ENCODE measurements at regions of chr9 and their contacts with region 1.

Region 1: DNA sequence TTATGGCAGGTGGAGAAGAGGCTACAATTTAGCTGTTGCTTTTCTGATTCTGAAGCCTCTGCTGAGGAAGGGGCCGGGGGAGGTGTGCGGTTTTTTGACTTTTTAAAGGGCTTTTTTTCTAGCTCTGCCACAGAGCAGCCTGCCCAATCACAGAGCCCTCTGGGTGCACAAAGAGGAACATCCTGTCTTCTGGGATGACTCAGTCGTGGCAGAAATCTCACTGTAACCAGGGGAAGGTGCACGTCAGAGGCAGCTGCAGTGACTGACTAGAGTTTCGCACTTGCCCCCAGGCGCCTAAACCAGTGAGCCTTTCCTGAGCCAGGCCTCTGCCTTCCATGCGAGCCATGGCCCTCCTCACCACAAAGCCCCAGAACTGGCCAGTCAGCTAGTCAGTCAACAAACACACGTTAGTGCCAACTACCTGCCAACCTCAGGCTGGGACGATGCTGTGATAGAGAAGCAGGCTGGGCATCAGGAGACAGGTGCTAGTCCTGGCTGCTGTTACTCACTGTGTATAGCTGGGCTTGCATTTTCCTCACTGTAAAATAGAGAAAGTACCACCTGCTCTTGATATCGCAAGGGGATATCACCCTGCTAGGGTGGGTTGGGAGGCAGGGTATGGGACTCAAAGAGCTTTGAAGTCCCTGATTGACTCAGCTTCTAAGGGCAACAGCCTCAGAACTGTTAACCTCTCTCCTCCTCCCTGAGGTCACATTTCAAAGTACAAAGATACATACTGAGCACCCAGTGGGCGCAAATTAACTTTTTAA is 2.2 kb downstream of the AKNA start:
- DNase-seq: peak; percentile 95
- ATAC-seq: peak; percentile 81
- H3K4me3 Mint-ChIP-seq: peak overlapping the region; percentile 99
- H3K27ac Mint-ChIP-seq: peak overlapping the region; percentile 95
- H3K4me1 Mint-ChIP-seq: peaks cover 50% of the 10 kb centered on the region
- H3K27me3 Mint-ChIP-seq: no peaks in the 10 kb centered on the region

Region 2: DNA sequence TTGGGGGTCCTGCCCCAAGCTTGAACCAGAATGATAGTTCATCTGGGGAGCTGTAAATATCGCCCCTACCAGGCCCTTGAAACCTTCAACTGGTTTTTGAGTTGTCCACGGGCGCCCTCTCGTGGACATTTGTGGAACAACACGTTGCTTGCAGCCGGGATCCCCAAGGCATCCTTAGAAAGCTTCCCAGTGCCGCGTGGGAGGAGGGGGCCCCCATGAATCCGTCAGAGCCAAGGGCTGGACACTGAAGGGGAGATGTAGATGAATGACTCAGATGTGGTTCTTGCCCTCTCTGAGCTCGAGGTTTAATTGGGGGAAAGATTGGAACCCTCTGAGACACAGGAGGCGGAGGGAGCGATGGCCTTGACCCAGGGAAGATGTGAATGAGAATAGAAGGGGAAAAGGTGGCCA is 94.5 kb before region 1 on chr9:
- CTCF ChIA-PET with region 1: no interaction called
- POLR2A ChIA-PET with region 1: no interaction called
- DNase-seq: peak; percentile 78
- ATAC-seq: peak; percentile 71
- H3K4me3 Mint-ChIP-seq: no peak overlapping the region
- H3K27ac Mint-ChIP-seq: no peak overlapping the region
- H3K4me1 Mint-ChIP-seq: no peaks in the 10 kb centered on the region
- H3K27me3 Mint-ChIP-seq: peaks cover 5% of the 10 kb centered on the region

Region 3: GRCh38 chr9:114339130-114339908 is 46.3 kb before region 1 on chr9:
- CTCF ChIA-PET with region 1: interaction called, 46 read pairs
- POLR2A ChIA-PET with region 1: interaction called, 7 read pairs
- DNase-seq: peak; percentile 64
- ATAC-seq: peak; percentile 46
- H3K4me3 Mint-ChIP-seq: no peak overlapping the region
- H3K27ac Mint-ChIP-seq: peak overlapping the region; percentile 43
- H3K4me1 Mint-ChIP-seq: peaks cover 43% of the 10 kb centered on the region
- H3K27me3 Mint-ChIP-seq: no peaks in the 10 kb centered on the region

Region 4: GRCh38 chr9:114348906-114349482 is 36.6 kb before region 1 on chr9:
- CTCF ChIA-PET with region 1: interaction called, 42 read pairs
- POLR2A ChIA-PET with region 1: interaction called, 10 read pairs
- DNase-seq: peak; percentile 78
- ATAC-seq: peak; percentile 75
- H3K4me3 Mint-ChIP-seq: peak overlapping the region; percentile 16
- H3K27ac Mint-ChIP-seq: peak overlapping the region; percentile 92
- H3K4me1 Mint-ChIP-seq: peaks cover 69% of the 10 kb centered on the region
- H3K27me3 Mint-ChIP-seq: no peaks in the 10 kb centered on the region

Region 5: GRCh38 chr9:114366334-114367128 is 19.1 kb before region 1 on chr9:
- CTCF ChIA-PET with region 1: interaction called, 116 read pairs
- POLR2A ChIA-PET with region 1: interaction called, 407 read pairs
- DNase-seq: peak; percentile 59
- ATAC-seq: peak; percentile 38
- H3K4me3 Mint-ChIP-seq: peak overlapping the region; percentile 29
- H3K27ac Mint-ChIP-seq: peak overlapping the region; percentile 88
- H3K4me1 Mint-ChIP-seq: peaks cover 92% of the 10 kb centered on the region
- H3K27me3 Mint-ChIP-seq: no peaks in the 10 kb centered on the region

Region 6: DNA sequence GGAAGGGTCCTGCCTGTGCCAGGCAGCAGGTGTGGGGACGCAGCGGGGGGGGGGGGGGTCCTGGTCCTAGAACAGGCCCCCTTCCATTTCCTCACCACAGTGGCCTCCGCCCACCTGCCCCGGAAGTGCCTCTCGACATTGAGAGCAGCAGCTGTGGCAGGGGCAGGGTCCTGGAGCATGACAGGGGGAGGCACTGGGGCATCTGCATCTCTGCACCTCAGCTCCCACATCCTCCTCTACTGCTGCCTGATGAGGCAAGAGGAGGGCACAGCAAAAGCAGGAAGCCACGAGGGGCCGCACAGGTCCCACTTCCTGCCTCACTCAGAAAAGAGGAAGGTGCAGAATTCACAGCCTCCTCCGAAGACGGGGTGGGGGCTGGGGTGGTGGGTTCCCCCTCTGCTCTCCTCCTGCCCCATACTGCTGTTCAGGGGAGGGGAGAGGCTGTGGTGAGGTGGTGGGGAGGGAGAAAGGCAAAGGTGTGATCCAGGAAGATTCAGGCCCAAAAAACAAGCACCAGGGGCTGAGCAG is 12.6 kb before region 1 on chr9:
- CTCF ChIA-PET with region 1: interaction called, 116 read pairs
- POLR2A ChIA-PET with region 1: interaction called, 407 read pairs
- DNase-seq: peak; percentile 95
- ATAC-seq: peak; percentile 83
- H3K4me3 Mint-ChIP-seq: peak overlapping the region; percentile 75
- H3K27ac Mint-ChIP-seq: peak overlapping the region; percentile 84
- H3K4me1 Mint-ChIP-seq: peaks cover 93% of the 10 kb centered on the region
- H3K27me3 Mint-ChIP-seq: no peaks in the 10 kb centered on the region

Region 7: GRCh38 chr9:114397848-114398605 is 12.4 kb after region 1 on chr9:
- CTCF ChIA-PET with region 1: interaction called, 35 read pairs
- POLR2A ChIA-PET with region 1: interaction called, 67 read pairs
- DNase-seq: peak; percentile 98
- ATAC-seq: peak; percentile 87
- H3K4me3 Mint-ChIP-seq: peak overlapping the region; percentile 99
- H3K27ac Mint-ChIP-seq: peak overlapping the region; percentile 90
- H3K4me1 Mint-ChIP-seq: peaks cover 50% of the 10 kb centered on the region
- H3K27me3 Mint-ChIP-seq: peaks cover 3% of the 10 kb centered on the region

Region 8: DNA sequence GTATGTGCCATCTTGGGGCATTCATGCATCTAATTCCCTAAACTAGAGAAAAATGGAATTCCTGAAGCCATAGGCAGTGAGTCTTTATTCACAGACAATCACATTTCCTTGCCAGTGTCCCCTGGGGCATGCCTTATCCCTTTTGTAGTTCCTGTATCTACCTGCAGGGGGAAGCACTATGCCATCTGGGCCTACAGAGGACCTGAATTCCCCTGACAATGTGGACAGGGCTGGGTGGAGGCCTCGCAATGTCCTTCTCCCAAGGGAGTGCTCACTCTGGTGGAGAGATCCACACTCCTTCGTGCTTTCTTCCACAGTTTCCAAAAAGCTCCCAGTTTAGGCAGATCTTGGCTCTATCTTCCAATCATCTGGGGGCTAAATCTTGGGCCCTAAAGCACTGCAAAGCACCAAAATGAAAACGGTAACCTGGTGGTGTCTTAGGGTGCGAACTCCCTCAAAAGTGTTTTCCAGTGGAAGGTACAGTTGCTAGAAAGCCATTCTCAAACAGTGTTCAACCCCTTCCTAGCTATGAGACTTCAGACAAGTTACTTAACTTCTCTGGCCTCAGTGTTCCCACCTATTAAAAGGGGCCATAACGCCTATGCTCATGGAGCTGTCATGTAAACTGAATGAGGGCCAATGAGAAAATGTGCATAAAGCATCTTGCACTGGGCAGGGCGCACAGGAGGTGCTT is 102.2 kb after region 1 on chr9:
- CTCF ChIA-PET with region 1: no interaction called
- POLR2A ChIA-PET with region 1: no interaction called
- DNase-seq: peak; percentile 76
- ATAC-seq: peak; percentile 73
- H3K4me3 Mint-ChIP-seq: no peak overlapping the region
- H3K27ac Mint-ChIP-seq: no peak overlapping the region
- H3K4me1 Mint-ChIP-seq: peaks cover 26% of the 10 kb centered on the region
- H3K27me3 Mint-ChIP-seq: no peaks in the 10 kb centered on the region

Region 9: GRCh38 chr9:114709636-114710035 is 324.0 kb after region 1 on chr9:
- CTCF ChIA-PET with region 1: no interaction called
- POLR2A ChIA-PET with region 1: no interaction called
- DNase-seq: no peak
- ATAC-seq: no peak
- H3K4me3 Mint-ChIP-seq: no peak overlapping the region
- H3K27ac Mint-ChIP-seq: peak overlapping the region; percentile 80
- H3K4me1 Mint-ChIP-seq: peaks cover 67% of the 10 kb centered on the region
- H3K27me3 Mint-ChIP-seq: no peaks in the 10 kb centered on the region

Measured in activated CD8-positive, alpha-beta T cell treated with anti-CD3 and anti-CD28 coated beads, Interleukin-2, amount 10 ng/mL, durations not matched to agents 7 days and 5 days (primary cell).